Heart left ventricle (tissue), 16 donors: ENCODE measurements at regions of chr12 and their contacts with region 1.

Region 1: DNA sequence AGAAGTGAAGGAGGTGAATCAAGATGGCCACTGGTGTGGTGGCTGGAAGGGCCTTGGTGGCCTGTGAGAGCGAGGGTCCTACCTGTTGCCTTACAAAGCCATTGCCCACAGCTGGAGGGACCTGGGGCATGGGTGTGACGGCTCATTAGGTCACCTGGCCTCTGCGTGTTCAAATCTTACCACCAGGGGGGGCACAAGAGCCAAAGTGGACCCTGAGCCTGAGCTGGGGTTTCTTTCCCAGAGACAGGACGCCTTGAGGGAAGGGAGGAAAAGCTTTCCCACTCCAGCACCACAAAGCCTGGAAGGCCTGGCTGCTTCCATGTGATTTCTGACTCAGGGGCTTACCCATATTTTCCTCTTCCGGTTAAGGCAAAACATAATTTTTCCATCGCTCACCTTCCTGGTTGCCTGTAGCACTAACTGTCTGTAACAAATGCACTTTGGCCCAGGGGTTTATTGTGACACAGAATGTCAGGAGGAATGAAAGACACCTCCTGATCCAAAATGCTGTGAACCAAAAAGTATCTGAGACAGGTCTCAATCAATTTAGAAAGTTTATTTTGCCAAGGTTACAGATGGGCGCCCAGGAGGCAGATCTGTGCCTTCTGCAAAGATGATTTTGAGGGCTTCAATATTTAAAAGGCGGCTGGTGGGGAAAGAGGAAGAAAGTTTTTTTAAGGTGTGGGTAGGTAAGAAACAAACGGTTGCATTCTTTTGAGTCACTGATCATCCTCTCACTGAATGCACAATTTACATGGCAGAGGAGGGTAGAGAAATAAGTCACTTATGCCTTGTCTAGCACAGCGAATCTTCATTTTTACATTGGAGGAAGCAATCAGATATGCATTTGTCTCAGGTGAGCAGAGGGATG is 4.3 kb upstream of the CD9 start:
- DNase-seq: peak; percentile 80 to 88 (median 88)
- ATAC-seq: peak; percentile 78 to 85 (median 81)
- H3K4me3 ChIP-seq: no peak overlapping the region
- H3K27ac ChIP-seq: peak overlapping the region; percentile 24 to 80 (median 52)
- H3K4me1 ChIP-seq: peaks cover 0 to 36% (median 13%) of the 10 kb centered on the region in 12 donors
- H3K27me3 ChIP-seq: peaks cover 0 to 12% (median 0%) of the 10 kb centered on the region in 9 donors
- CTCF ChIP-seq: peak; percentile 90 to 96 (median 94)
- POLR2A ChIP-seq: no peak

Region 2: DNA sequence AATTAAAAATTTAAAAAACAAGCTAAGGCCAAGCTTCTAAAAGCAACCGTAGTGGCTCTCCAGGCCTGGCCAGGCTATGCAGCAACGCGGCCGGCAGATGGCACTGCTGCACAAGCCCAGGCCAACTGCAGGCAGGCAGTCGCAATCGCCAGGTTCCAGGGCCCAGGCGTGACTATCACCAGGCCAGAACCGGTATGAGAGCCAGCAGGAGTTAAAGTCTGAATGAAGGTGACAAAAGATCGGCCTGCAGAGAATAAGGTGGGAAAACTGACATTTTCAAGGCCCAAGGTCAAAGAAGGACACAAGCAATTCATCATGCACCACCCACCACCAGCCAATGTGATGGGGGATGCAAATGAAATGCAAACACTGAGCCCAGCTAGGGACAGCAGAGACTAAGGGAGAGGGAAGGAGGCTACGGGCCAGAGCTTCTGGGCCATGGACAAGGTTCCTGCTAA is 207.2 kb before region 1 on chr12:
- intact Hi-C with region 1: loop called in 2 of 10 experiments (anchors 10 kb)
- DNase-seq: peak; percentile 70 to 88 (median 78)
- ATAC-seq: peak; percentile 49 to 92 (median 88)
- H3K4me3 ChIP-seq: no peak overlapping the region
- H3K27ac ChIP-seq: peak overlapping the region in 1 of 12 donors; percentile 28
- H3K4me1 ChIP-seq: peaks cover 0 to 4% (median 0%) of the 10 kb centered on the region in 12 donors
- H3K27me3 ChIP-seq: no peaks in the 10 kb centered on the region
- CTCF ChIP-seq: peak; percentile 89 to 97 (median 92)
- POLR2A ChIP-seq: no peak

Region 3: DNA sequence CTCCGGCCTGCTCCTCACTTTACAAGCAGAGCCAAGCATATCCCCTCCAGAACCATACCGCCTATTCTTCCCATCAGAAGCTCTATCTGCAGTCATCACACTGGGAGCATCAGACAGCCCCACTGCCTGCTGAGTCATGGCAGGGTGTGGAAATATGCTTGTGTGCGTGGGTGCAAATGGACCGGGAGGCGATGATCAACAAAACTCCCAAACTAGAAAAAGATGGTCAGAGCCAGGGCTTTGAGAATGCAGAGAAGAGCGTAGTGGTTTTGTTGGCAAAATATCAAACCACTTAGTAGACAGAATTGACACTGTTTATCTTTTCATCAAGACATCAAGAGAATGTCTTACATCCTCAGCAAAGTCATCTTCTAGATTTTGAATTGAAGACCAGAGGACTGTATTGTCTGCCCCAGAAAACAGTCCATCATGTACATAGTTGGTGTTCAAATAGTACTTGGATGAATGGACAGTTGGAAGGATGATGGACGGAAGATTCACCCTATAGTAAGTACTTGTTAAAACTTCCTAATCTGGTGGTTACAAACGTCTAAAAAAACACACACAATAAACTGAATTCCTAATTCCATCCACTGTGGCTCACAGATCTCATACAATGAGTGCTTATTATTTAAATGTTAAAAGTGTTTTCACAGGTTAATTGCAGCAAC is 126.3 kb before region 1 on chr12:
- intact Hi-C with region 1: loop called in 5 of 10 experiments (anchors 5 to 10 kb)
- DNase-seq: peak in 1 of 5 donors; percentile 52
- ATAC-seq: peak in 2 of 4 donors; percentile 36 to 61
- H3K4me3 ChIP-seq: no peak overlapping the region
- H3K27ac ChIP-seq: peak overlapping the region in 8 of 12 donors; percentile 18 to 87 (median 30)
- H3K4me1 ChIP-seq: peaks cover under 1 to 52% (median 20%) of the 10 kb centered on the region in 12 donors
- H3K27me3 ChIP-seq: no peaks in the 10 kb centered on the region
- CTCF ChIP-seq: no peak
- POLR2A ChIP-seq: no peak

Region 4: DNA sequence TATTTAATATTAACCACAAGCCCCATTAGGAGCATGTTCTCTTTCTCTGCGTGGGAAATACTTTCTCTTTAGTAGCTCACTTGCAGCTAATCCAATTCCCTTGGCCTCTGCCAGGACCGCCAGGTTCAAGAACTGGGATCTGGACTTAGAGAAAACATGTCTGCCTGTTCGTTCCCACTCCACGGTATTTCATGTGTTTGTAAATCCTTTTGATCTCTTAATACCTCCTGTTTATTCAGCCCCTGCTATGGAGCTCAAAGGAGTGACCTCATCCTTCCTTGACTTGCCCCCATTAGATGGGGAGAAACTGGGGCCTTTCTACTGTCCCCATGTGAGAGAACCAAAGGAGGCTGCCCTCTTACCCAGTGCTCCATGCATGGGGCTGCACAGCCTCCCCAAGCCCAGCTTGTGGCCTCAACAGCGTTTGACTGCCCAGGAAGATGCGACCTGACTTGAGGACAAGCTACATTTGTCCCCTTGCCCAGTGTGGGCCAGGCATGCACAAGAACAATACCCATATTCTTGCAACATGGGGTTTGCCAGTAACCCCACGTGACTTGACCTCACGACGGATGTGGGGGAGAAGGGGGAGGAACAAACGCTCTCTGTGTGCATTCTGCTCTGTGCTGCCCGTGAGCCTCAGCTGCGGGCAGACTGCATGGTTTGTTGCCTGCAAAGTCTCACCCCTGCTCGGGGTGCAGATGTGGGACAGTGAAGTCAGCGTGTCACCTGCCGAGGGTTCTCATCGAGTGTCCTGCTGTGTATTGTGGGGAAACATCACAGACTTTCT is 34.6 kb after region 1 on chr12:
- intact Hi-C with region 1: loop called in 8 of 10 experiments (anchors 2 to 5 kb)
- DNase-seq: peak; percentile 56 to 71 (median 61)
- ATAC-seq: peak in 2 of 4 donors; percentile 6 to 14
- H3K4me3 ChIP-seq: peak overlapping the region in 1 of 12 donors; percentile 1
- H3K27ac ChIP-seq: peak overlapping the region; percentile 67 to 96 (median 88)
- H3K4me1 ChIP-seq: peaks cover 35 to 100% (median 91%) of the 10 kb centered on the region in 12 donors
- H3K27me3 ChIP-seq: no peaks in the 10 kb centered on the region
- CTCF ChIP-seq: no peak
- POLR2A ChIP-seq: no peak

Region 5: DNA sequence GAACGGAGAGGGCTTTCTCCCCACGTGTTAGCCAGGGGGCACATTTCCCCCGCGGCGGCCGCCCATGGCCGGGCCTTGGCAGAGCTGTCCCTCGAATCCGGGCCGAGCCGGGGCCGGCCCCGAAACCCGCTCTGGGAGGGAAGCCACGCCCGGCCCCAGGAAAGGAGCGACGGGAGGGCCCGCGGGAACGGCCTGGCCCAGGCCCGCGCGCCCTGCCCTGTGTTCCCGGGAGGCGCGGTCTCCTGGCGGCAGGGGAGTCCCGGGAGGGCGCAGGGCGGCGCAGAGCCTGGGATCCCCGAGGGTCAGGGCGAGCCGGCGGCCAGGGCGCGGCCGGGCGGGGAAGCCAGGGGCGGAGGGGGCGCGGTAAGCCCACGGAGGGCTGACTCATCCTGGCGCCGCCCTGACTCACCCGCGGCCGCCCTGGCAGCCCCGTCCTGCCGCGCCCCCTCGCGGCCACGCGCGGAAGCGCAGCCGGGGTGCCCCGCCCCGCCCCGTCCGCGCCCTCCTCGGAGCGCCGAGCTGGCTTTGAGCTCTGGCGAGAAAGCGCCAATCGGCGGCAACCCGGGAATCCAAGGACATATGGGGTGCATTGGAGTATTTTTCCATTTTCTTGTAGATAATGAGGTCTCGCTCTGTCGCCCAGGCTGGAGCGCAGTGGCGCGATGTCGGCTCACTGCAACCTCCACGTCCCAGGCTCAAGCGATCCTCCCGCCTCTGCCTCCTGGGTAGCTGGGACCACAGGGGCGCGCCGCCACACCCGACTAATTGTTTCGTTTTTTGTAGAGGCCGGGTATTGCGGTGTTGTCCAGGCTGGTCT is 82.7 kb after region 1 on chr12:
- intact Hi-C with region 1: loop called in 9 of 10 experiments (anchors 1 to 2 kb)
- DNase-seq: peak; percentile 87 to 92 (median 89)
- ATAC-seq: peak; percentile 76 to 94 (median 90)
- H3K4me3 ChIP-seq: peak overlapping the region; percentile 17 to 70 (median 59)
- H3K27ac ChIP-seq: peak overlapping the region; percentile 11 to 92 (median 84)
- H3K4me1 ChIP-seq: peaks cover 0 to 41% (median 32%) of the 10 kb centered on the region in 12 donors
- H3K27me3 ChIP-seq: no peaks in the 10 kb centered on the region
- CTCF ChIP-seq: peak; percentile 56 to 99 (median 92)
- POLR2A ChIP-seq: peak in 1 of 2 donors; percentile 37

Region 6: GRCh38 chr12:6285063-6285477 is 89.2 kb after region 1 on chr12:
- intact Hi-C with region 1: loop called in 1 of 10 experiments (anchors 2 kb)
- DNase-seq: peak in 2 of 5 donors; percentile 69 to 74
- ATAC-seq: peak; percentile 65 to 87 (median 80)
- H3K4me3 ChIP-seq: no peak overlapping the region
- H3K27ac ChIP-seq: no peak overlapping the region
- H3K4me1 ChIP-seq: peaks cover 0 to 11% (median 5%) of the 10 kb centered on the region in 12 donors
- H3K27me3 ChIP-seq: no peaks in the 10 kb centered on the region
- CTCF ChIP-seq: peak; percentile 86 to 98 (median 92)
- POLR2A ChIP-seq: no peak